ENCODE measurements at regions of chr16 and their contacts with region 1.

Region 1: DNA sequence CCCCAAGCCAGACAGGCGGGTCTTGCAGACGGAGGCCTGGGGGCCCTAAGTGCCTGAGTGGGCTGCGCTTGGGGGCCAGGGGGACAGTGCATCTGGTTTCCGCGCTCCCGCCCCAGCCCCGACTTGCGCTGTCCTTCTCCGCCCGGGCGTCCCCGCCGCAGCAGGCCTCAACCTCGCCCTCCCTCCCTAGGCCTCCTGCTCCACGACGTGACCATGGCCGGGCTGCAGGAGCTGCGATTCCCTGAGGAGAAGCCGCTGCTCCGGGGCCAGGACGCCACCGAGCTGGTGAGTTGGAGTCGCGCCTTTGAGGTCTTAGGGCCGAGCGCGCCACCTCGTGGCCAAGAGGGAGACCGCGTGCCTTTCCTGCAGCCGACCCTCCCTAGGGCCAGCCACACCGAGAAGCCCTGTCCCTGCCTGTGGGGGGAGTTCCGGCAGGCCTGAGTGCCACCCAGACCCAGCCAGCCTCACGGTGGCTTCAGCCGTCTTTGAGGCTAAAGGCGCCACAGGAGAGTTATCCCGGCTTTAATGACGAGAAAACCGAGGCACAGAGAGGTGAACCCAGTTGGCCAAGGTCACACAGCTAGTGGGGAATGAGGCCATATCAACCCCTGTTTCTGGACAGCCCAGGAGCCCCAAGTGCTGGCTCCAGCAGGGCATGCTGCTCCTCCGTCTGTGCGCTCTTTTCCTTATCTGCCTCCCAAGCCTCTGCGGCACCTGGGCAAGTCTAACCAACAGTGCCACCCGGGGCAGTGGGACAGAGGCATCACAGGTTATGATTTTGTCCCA is 12.2 kb upstream of the NDRG4 start:
- DNase-seq: peak; percentile 87 to 94 (median 92)
- ATAC-seq: peak; percentile 44 to 82 (median 73)
- H3K4me3 ChIP-seq: peak overlapping the region in 9 of 12 donors; percentile 15 to 39 (median 28)
- H3K27ac ChIP-seq: peak overlapping the region; percentile 6 to 80 (median 68)
- H3K4me1 ChIP-seq: peaks cover 0 to 76% (median 35%) of the 10 kb centered on the region in 12 donors
- H3K27me3 ChIP-seq: no peaks in the 10 kb centered on the region
- CTCF ChIP-seq: peak; percentile 89 to 99 (median 94)
- POLR2A ChIP-seq: peak in 1 of 2 donors; percentile 16

Region 2: DNA sequence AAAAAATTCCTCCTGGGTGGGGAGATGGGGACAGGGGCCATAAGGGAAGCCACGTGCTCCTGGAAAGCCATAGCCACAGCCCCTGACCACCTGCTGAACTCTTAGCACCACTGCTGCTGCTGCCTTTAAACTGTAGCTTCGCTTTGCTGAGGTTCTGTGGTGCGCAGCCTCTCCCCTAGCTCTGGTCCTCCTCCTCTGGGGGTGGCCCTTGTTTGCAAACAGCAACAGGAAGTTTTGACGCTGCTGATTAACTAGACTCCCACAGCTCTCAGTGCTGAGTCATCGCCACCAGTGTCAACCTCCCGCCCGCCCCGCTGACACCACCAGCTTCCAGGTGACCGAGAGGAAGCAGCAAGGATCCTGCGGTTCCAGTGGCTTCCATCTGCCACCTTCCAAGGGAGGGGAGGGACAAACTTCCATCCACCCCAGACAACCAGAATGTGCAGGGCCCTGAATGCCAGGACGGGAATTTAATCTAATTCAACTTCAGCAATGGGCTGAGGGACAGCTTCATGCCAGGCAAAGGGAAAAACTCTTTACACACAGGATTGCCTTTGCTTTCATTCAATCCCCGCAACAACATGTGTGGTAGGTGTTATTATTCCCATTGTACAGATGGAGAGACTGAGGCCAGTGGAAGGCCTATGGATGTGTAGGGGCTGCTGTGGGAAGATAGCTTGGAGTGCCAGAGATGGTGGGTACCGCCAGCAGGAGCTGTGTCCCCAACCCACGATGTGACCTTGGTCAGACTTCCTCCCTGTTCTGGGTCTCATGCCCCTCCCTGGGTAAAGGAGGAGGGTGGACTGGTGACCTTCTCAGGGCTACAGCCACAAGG is 677.3 kb before region 1 on chr16:
- intact Hi-C with region 1: no loop called
- DNase-seq: peak; percentile 82 to 88 (median 85)
- ATAC-seq: peak; percentile 51 to 90 (median 82)
- H3K4me3 ChIP-seq: no peak overlapping the region
- H3K27ac ChIP-seq: peak overlapping the region in 11 of 12 donors; percentile 28 to 79 (median 52)
- H3K4me1 ChIP-seq: peaks cover 8 to 47% (median 24%) of the 10 kb centered on the region in 12 donors
- H3K27me3 ChIP-seq: no peaks in the 10 kb centered on the region
- CTCF ChIP-seq: no peak
- POLR2A ChIP-seq: peak in 1 of 2 donors; percentile 49

Region 3: DNA sequence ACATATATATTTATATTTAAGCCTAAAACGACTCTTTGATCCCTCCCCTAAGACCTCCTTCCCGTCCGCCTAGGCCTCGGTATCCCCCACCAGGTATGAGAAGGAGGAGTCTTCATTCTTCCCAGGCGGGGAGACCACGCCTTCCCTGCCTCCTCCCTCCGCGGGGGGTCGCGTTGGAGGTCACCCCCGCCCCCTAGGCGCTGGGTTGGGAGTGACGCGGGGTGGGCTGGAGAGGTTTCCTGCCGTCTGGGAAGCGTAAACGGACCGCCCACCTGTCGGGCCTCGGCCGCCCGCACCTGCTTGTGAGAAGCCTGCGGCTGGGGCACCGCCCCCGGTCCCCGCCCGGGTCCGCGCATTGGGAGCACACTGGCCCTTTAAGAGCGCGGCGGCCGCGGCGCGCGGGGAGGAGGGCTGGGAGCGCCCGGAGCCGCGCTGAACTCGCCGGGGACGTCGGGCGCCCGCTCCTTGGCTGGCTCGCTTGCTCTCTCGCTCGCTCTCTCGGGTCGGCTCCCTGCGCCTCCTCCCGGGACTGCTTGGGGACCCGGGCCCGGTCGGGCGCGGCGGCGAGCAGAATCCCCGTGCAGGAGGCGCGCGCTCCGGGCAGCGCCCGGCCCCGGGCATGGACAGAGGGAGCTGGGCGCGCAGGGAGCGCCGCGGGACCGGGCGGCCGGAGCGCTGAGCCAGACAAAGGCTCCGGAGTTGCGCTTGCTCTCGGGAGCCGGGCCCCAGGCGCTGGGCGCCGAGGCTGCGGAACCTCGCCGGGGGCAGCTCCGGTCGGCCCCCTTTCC is 462.2 kb before region 1 on chr16 and contains the start of gene MMP15:
- intact Hi-C with region 1: loop called in 2 of 10 experiments (anchors 10 kb)
- DNase-seq: peak; percentile 73 to 88 (median 78)
- ATAC-seq: peak; percentile 32 to 67 (median 56)
- H3K4me3 ChIP-seq: peak within 1 kb of the TSS; percentile 60 to 96 (median 88)
- H3K27ac ChIP-seq: peak within 1 kb of the TSS; percentile 75 to 99 (median 95)
- H3K4me1 ChIP-seq: peaks cover 17 to 91% (median 67%) of the 10 kb centered on the region in 12 donors
- H3K27me3 ChIP-seq: peaks cover 0 to 25% (median 0%) of the 10 kb centered on the region in 9 donors
- CTCF ChIP-seq: no peak
- POLR2A ChIP-seq: peak in 1 of 2 donors; percentile 69
- total RNA-seq, gene MMP15: 24.2 to 84.7 (median 60.9) TPM

Region 4: GRCh38 chr16:58198022-58198683 is 289.6 kb before region 1 on chr16 and contains the start of gene CSNK2A2:
- intact Hi-C with region 1: loop called in 1 of 10 experiments (anchors 10 kb)
- DNase-seq: peak; percentile 76 to 87 (median 81)
- ATAC-seq: peak; percentile 40 to 96 (median 90)
- H3K4me3 ChIP-seq: peak within 1 kb of the TSS; percentile 65 to 94 (median 88)
- H3K27ac ChIP-seq: peak within 1 kb of the TSS in 8 of 12 donors; percentile 31 to 76 (median 50)
- H3K4me1 ChIP-seq: peaks cover 0 to 35% (median 16%) of the 10 kb centered on the region in 12 donors
- H3K27me3 ChIP-seq: no peaks in the 10 kb centered on the region
- CTCF ChIP-seq: peak in 10 of 12 donors; percentile 15 to 66 (median 47)
- POLR2A ChIP-seq: no peak
- total RNA-seq, gene CSNK2A2: 25.6 to 48.4 (median 40.0) TPM

Region 5: DNA sequence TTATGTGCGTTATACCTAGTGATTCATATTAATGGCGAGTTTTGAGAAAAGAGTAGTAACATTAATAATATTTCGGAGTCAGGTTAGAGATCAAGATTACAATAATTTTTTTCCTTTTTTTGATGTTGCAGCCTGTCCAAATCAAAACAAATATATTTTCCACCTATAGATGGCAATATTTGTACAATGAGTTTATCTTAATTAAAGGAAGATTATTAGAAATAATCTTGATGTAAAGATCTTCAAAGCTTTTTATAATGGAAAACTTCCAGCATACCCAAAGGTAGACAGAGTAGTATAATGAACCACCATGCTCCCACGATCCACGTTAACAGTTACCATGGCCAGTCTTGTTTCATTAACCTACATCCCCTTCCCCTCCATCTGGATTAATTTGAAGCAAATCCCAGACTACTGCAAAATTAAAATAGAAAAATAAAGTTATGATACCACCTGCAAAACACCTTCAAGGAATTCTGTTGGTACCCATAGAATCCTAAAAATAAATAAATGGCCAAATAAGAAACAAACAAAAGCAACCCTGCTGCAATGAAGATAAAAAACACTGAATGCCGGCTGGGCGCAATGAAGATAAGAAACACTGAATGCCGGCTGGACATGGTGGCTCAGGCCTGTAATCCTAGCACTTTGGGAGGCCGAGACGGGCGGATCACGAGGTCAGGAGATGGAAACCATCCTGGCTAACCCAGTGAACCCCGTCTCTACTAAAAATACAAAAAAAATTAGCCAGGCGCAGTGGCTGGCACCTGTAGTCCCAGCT is 142.0 kb before region 1 on chr16:
- intact Hi-C with region 1: loop called in 1 of 10 experiments (anchors 2 kb)
- DNase-seq: no peak
- ATAC-seq: no peak
- H3K4me3 ChIP-seq: no peak overlapping the region
- H3K27ac ChIP-seq: peak overlapping the region in 3 of 12 donors; percentile 15 to 65 (median 62)
- H3K4me1 ChIP-seq: peaks cover 0 to 36% (median 19%) of the 10 kb centered on the region in 12 donors
- H3K27me3 ChIP-seq: peaks cover 0 to 18% (median 0%) of the 10 kb centered on the region in 9 donors
- CTCF ChIP-seq: peak in 11 of 12 donors; percentile 13 to 58 (median 34)
- POLR2A ChIP-seq: no peak

Region 6: GRCh38 chr16:58409316-58409973 is 78.3 kb before region 1 on chr16:
- intact Hi-C with region 1: loop called in 2 of 10 experiments (anchors 5 kb)
- DNase-seq: peak in 4 of 5 donors; percentile 46 to 75 (median 63)
- ATAC-seq: peak; percentile 48 to 81 (median 76)
- H3K4me3 ChIP-seq: no peak overlapping the region
- H3K27ac ChIP-seq: peak overlapping the region; percentile 31 to 98 (median 82)
- H3K4me1 ChIP-seq: peaks cover 0 to 49% (median 8%) of the 10 kb centered on the region in 12 donors
- H3K27me3 ChIP-seq: no peaks in the 10 kb centered on the region
- CTCF ChIP-seq: no peak
- POLR2A ChIP-seq: no peak

Region 7: DNA sequence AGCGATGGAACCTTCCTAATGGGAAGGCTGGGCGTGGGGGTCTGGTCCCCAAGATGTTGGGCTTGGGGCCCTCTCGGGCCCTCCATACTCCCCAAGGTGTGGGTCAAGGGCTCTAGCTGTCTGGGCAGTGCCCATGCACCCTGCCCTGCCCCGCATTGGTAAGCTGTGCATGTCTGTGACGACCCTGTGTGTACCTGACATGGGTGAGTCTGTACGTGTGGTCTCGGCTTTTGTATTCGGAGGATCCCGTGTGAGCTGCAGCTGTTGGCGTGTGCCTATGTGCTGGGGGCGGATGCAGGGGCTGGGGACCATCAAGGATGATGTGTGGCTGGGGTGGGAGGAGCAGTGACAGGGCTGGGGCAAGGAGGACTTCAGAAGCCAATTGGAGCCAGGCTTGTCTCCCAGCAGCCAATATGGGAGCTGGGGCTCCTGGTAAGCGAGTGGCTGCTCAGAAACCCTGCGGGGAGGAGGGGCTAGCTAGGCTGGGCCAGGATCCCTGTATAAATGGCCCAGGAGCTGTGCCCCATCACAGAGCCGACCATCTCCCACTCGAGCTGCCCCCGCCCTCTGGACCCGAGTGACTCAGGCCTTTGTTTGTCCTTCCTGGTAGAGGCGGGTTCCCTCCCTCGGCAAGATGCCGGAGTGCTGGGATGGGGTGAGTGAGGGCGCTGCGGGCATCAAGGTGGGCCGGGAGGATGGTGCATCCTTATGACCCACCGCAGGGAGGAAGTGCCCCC is 12.0 kb after region 1 on chr16 and contains the start of gene NDRG4:
- intact Hi-C with region 1: no loop called
- DNase-seq: peak in 3 of 5 donors; percentile 62 to 79 (median 75)
- ATAC-seq: peak; percentile 25 to 46 (median 37)
- H3K4me3 ChIP-seq: peak within 1 kb of the TSS in 9 of 12 donors; percentile 2 to 39 (median 18)
- H3K27ac ChIP-seq: peak within 1 kb of the TSS in 6 of 12 donors; percentile 8 to 56 (median 38)
- H3K4me1 ChIP-seq: peaks cover 0 to 63% (median 23%) of the 10 kb centered on the region in 12 donors
- H3K27me3 ChIP-seq: peaks cover 0 to 16% (median 0%) of the 10 kb centered on the region in 9 donors
- CTCF ChIP-seq: no peak
- POLR2A ChIP-seq: no peak
- total RNA-seq, gene NDRG4: 294 to 1,429 (median 742) TPM

Region 8: GRCh38 chr16:58515125-58515870 is 27.5 kb after region 1 on chr16 and contains the start of gene SETD6:
- intact Hi-C with region 1: no loop called
- DNase-seq: peak; percentile 88 to 94 (median 90)
- ATAC-seq: peak; percentile 76 to 92 (median 89)
- H3K4me3 ChIP-seq: peak within 1 kb of the TSS; percentile 69 to 89 (median 78)
- H3K27ac ChIP-seq: peak within 1 kb of the TSS; percentile 47 to 89 (median 80)
- H3K4me1 ChIP-seq: peaks cover 0 to 21% (median 15%) of the 10 kb centered on the region in 12 donors
- H3K27me3 ChIP-seq: no peaks in the 10 kb centered on the region
- CTCF ChIP-seq: peak in 5 of 12 donors; percentile 8 to 45 (median 21)
- POLR2A ChIP-seq: peak in 1 of 2 donors; percentile 48
- total RNA-seq, gene SETD6: 10.1 to 18.0 (median 14.3) TPM